CD8-positive, alpha-beta T cell (primary cell): ENCODE measurements at regions of chr3 and their contacts with region 1.

Region 1: DNA sequence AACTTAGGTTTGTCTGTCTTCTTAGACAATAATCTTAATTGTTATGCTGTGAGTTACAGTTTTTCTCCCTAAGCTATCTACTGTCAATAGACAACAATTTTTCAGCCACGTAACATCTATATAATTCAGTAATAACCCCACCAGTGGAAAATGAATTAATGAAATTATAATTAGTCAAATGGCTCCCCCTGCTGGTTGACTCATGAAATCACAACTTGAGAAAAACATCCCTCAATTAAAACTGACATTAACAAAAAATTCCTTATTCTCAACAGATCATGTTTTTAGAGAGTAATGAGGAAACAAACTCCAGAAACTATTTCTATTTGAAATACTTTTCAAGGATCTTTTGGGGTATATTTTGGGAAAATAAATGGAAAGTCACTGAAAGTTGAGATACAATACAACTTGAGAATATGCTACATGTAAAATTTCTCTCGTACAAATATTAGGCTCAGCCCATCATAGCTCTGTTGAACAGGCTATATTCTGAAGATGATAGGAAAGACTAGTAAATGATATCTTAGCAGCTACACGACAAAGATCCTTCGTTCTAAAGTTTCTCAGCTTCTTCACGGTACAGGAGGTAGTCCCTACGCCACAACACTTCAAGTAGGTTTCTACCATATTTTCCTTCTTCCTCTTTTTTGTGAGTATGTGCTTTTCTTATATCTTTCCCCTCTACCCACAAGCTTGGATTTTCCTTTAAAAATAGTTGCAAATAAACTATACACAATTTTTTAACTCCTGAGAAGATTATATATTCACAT is 20.7 kb downstream of the PPP1R2 start:
- DNase-seq: peak in 3 of 9 experiments; percentile 52 to 65 (median 56)
- ATAC-seq: peak; percentile 30
- H3K4me3 ChIP-seq: no peak overlapping the region
- H3K4me3 Mint-ChIP-seq: no peak overlapping the region
- H3K27ac ChIP-seq: no peak overlapping the region
- H3K27ac Mint-ChIP-seq: peak overlapping the region; percentile 75
- H3K4me1 ChIP-seq: peaks cover 35% of the 10 kb centered on the region
- H3K4me1 Mint-ChIP-seq: peaks cover 46% of the 10 kb centered on the region
- H3K27me3 ChIP-seq: no peaks in the 10 kb centered on the region
- H3K27me3 Mint-ChIP-seq: no peaks in the 10 kb centered on the region
- CTCF ChIP-seq: peak; percentile 93

Region 2: GRCh38 chr3:195532834-195533233 is 10.4 kb after region 1 on chr3:
- CTCF ChIA-PET with region 1: interaction called, 33 read pairs
- POLR2A ChIA-PET with region 1: interaction called, 3 read pairs
- intact Hi-C with region 1: no loop called
- DNase-seq: no peak
- ATAC-seq: no peak
- H3K4me3 ChIP-seq: no peak overlapping the region
- H3K4me3 Mint-ChIP-seq: peak overlapping the region; percentile 40
- H3K27ac ChIP-seq: no peak overlapping the region
- H3K27ac Mint-ChIP-seq: peak overlapping the region; percentile 69
- H3K4me1 ChIP-seq: peaks cover 75% of the 10 kb centered on the region
- H3K4me1 Mint-ChIP-seq: peaks cover 85% of the 10 kb centered on the region
- H3K27me3 ChIP-seq: no peaks in the 10 kb centered on the region
- H3K27me3 Mint-ChIP-seq: no peaks in the 10 kb centered on the region
- CTCF ChIP-seq: no peak